ENCODE measurements at regions of chr22 and their contacts with region 1.

Region 1: GRCh38 chr22:36239401-36240171 is at the start of gene APOL2:
- DNase-seq: peak; percentile 59 to 94 (median 87)
- ATAC-seq: peak; percentile 97
- H3K4me3 ChIP-seq: peak within 1 kb of the TSS; percentile 81 to 89
- H3K4me3 Mint-ChIP-seq: peak within 1 kb of the TSS; percentile 95
- H3K27ac ChIP-seq: peak within 1 kb of the TSS; percentile 69 to 92
- H3K27ac Mint-ChIP-seq: peak within 1 kb of the TSS; percentile 96
- H3K4me1 ChIP-seq: peaks cover 38% of the 10 kb centered on the region
- H3K4me1 Mint-ChIP-seq: peaks cover 50% of the 10 kb centered on the region
- H3K27me3 ChIP-seq: no peaks in the 10 kb centered on the region
- H3K27me3 Mint-ChIP-seq: no peaks in the 10 kb centered on the region
- CTCF ChIP-seq: peak; percentile 69
- total RNA-seq, gene APOL2: 17.4 to 18.2 TPM

Region 2: GRCh38 chr22:35987487-35987886 is 252.1 kb before region 1 on chr22:
- CTCF ChIA-PET with region 1: no interaction called
- POLR2A ChIA-PET with region 1: no interaction called
- intact Hi-C with region 1: no loop called
- DNase-seq: no peak
- ATAC-seq: no peak
- H3K4me3 ChIP-seq: no peak overlapping the region
- H3K4me3 Mint-ChIP-seq: no peak overlapping the region
- H3K27ac ChIP-seq: no peak overlapping the region
- H3K27ac Mint-ChIP-seq: no peak overlapping the region
- H3K4me1 ChIP-seq: no peaks in the 10 kb centered on the region
- H3K4me1 Mint-ChIP-seq: no peaks in the 10 kb centered on the region
- H3K27me3 ChIP-seq: no peaks in the 10 kb centered on the region
- H3K27me3 Mint-ChIP-seq: peaks cover 6% of the 10 kb centered on the region
- CTCF ChIP-seq: no peak

Region 3: DNA sequence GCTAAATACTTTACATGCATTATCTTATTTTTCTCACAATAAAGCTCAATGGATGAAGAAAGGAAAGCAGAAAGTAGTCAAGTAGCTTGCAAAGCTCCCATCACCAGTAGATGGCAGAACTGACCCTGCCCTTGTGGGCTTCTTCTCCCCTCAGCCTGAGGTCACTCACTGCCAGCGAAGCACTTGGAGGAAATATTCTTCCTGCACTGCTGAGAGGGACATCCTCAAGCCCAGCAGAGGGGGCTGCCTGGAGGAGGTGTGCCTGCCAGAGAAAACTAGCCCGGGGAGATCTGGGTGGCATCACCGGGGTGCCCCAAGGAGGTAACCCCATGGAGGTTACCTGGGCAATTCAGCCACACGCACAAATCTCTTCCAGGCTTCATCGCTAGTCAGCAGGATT is 44.6 kb before region 1 on chr22:
- CTCF ChIA-PET with region 1: interaction called, 4 read pairs
- POLR2A ChIA-PET with region 1: no interaction called
- intact Hi-C with region 1: loop called (anchors 1 to 5 kb)
- DNase-seq: peak; percentile 4 to 63 (median 41)
- ATAC-seq: peak; percentile 59
- H3K4me3 ChIP-seq: no peak overlapping the region
- H3K4me3 Mint-ChIP-seq: no peak overlapping the region
- H3K27ac ChIP-seq: no peak overlapping the region
- H3K27ac Mint-ChIP-seq: no peak overlapping the region
- H3K4me1 ChIP-seq: peaks cover 11% of the 10 kb centered on the region
- H3K4me1 Mint-ChIP-seq: peaks cover 22% of the 10 kb centered on the region
- H3K27me3 ChIP-seq: no peaks in the 10 kb centered on the region
- H3K27me3 Mint-ChIP-seq: peaks cover 2% of the 10 kb centered on the region
- CTCF ChIP-seq: peak; percentile 56

Region 4: DNA sequence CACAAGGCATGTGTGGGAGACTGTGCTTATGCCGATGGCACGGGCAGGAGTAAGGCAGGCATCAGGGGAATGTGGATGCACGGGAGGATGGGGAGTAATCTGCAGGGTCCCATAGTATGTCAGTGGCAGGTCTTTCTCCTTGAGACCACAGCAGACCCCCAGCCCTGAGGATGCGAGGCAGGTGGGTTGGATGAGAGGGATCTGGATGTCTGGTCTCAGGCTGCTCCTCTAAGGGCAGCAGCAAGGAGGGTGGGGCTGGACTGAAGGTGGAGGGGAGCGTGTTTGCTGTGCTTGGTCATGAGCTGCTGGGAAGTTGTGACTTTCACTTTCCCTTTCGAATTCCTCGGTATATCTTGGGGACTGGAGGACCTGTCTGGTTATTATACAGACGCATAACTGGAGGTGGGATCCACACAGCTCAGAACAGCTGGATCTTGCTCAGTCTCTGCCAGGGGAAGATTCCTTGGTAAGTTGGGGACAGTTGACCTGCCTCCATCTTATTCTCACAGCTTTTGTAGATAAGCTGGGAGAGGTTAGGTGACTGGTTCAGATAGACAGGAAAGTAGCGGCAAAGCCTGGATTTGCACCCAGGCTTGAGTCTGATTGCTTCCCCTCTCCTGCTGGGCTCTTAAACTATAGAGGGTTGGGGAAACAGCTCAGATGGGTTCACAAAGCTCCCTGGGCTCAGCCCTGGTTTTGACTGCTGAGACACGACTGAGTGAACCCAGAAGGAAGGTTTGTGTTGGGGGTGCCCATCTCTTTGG is 13.3 kb after region 1 on chr22 and contains the start of gene APOL1:
- CTCF ChIA-PET with region 1: interaction called, 6 read pairs
- POLR2A ChIA-PET with region 1: interaction called, 10 read pairs
- intact Hi-C with region 1: loop called (anchors 1 to 2 kb)
- DNase-seq: peak in 8 of 9 experiments; percentile 13 to 85 (median 53)
- ATAC-seq: peak; percentile 95
- H3K4me3 ChIP-seq: peak within 1 kb of the TSS; percentile 68 to 69
- H3K4me3 Mint-ChIP-seq: peak within 1 kb of the TSS; percentile 97
- H3K27ac ChIP-seq: peak within 1 kb of the TSS; percentile 67 to 75
- H3K27ac Mint-ChIP-seq: peak within 1 kb of the TSS; percentile 97
- H3K4me1 ChIP-seq: peaks cover 27% of the 10 kb centered on the region
- H3K4me1 Mint-ChIP-seq: peaks cover 48% of the 10 kb centered on the region
- H3K27me3 ChIP-seq: no peaks in the 10 kb centered on the region
- H3K27me3 Mint-ChIP-seq: no peaks in the 10 kb centered on the region
- CTCF ChIP-seq: no peak
- total RNA-seq, gene APOL1: 5.0 to 5.3 TPM

Region 5: GRCh38 chr22:36286471-36287224 is 47.1 kb after region 1 on chr22:
- CTCF ChIA-PET with region 1: interaction called, 18 read pairs
- POLR2A ChIA-PET with region 1: no interaction called
- intact Hi-C with region 1: no loop called
- DNase-seq: peak; percentile 38 to 81 (median 70)
- ATAC-seq: peak; percentile 71
- H3K4me3 ChIP-seq: no peak overlapping the region
- H3K4me3 Mint-ChIP-seq: no peak overlapping the region
- H3K27ac ChIP-seq: peak overlapping the region; percentile 10 to 26
- H3K27ac Mint-ChIP-seq: peak overlapping the region; percentile 82
- H3K4me1 ChIP-seq: peaks cover 35% of the 10 kb centered on the region
- H3K4me1 Mint-ChIP-seq: peaks cover 33% of the 10 kb centered on the region
- H3K27me3 ChIP-seq: no peaks in the 10 kb centered on the region
- H3K27me3 Mint-ChIP-seq: no peaks in the 10 kb centered on the region
- CTCF ChIP-seq: peak; percentile 84

Measured in CD8-positive, alpha-beta T cell (primary cell).